Endothelial cell of umbilical vein (primary cell): ENCODE measurements at regions of chr1 and their contacts with region 1.

Region 1: GRCh38 chr1:119895986-119896702 is at the start of gene ADAM30:
- DNase-seq: no peak
- H3K4me3 ChIP-seq: no peak within 1 kb of the TSS
- H3K27ac ChIP-seq: no peak within 1 kb of the TSS
- H3K4me1 ChIP-seq: no peaks in the 10 kb centered on the region
- H3K27me3 ChIP-seq: peaks cover 12 to 16% of the 10 kb centered on the region in 2 experiments
- CTCF ChIP-seq: peak; percentile 41 to 52
- POLR2A ChIP-seq: no peak
- total RNA-seq, gene ADAM30: not detected in 2 replicates

Region 2: GRCh38 chr1:119840745-119841144 is 55.4 kb before region 1 on chr1:
- CTCF ChIA-PET with region 1: no interaction called
- POLR2A ChIA-PET with region 1: no interaction called
- dilution Hi-C with region 1: no loop called
- intact Hi-C with region 1: loop called (anchors 5 kb)
- DNase-seq: no peak
- H3K4me3 ChIP-seq: no peak overlapping the region
- H3K27ac ChIP-seq: no peak overlapping the region
- H3K4me1 ChIP-seq: no peaks in the 10 kb centered on the region
- H3K27me3 ChIP-seq: peaks cover 4 to 8% of the 10 kb centered on the region in 2 experiments
- CTCF ChIP-seq: no peak
- POLR2A ChIP-seq: no peak

Region 3: DNA sequence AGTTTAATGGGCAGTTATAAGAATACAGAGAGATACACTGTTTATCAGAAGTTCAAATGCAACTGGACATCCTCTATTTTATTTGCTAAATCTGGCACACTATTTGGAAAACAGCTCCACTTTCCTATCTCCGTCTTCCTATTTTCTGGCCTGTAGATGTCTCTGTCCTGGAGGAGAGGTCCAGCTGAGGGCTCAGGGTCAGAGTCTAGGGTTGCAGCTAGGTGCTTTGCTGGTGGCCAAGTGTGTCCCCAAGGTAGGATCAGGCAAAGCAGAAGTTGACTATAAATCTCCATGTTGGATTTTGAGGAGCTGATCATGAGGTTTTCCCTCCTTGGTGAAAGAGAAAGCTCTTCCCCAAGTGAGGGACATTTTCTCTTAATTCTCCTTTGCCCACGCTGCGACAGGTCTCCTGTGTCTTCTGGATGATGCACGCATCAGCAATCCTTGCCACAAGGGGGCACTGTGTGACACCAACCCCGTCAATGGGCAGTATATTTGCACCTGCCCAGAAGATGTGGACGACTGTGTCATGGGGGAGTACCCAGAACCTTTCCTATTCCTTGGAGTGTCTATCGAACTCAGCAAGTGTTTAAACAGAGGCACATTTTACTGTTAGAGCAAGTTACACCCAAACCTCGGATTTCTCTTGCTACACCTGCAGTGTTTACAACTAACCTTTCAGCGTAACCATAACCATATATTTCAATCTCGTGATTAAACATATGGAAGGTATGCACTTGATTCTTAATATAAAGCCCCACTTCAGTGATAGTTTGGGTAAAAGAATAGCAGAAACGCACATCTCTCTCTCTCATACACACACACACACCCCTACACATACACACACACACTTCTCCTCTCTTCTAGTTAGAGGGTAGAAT is 10.0 kb before region 1 on chr1:
- CTCF ChIA-PET with region 1: interaction called, 11 read pairs
- POLR2A ChIA-PET with region 1: no interaction called
- dilution Hi-C with region 1: no loop called
- intact Hi-C with region 1: no loop called
- DNase-seq: peak; percentile 54
- H3K4me3 ChIP-seq: no peak overlapping the region
- H3K27ac ChIP-seq: no peak overlapping the region
- H3K4me1 ChIP-seq: no peaks in the 10 kb centered on the region
- H3K27me3 ChIP-seq: peaks cover 12 to 14% of the 10 kb centered on the region in 2 experiments
- CTCF ChIP-seq: peak; percentile 80 to 82
- POLR2A ChIP-seq: no peak